ENCODE measurements at regions of chr3 and their contacts with region 1.

Region 1: GRCh38 chr3:141311496-141312353 is 56.6 kb upstream of the ZBTB38 start:
- DNase-seq: peak; percentile 99
- ATAC-seq: peak; percentile 98
- H3K4me3 ChIP-seq: peak overlapping the region; percentile 40
- H3K27ac ChIP-seq: peak overlapping the region; percentile 92
- H3K4me1 ChIP-seq: peaks cover 8% of the 10 kb centered on the region
- H3K27me3 ChIP-seq: no peaks in the 10 kb centered on the region

Region 2: DNA sequence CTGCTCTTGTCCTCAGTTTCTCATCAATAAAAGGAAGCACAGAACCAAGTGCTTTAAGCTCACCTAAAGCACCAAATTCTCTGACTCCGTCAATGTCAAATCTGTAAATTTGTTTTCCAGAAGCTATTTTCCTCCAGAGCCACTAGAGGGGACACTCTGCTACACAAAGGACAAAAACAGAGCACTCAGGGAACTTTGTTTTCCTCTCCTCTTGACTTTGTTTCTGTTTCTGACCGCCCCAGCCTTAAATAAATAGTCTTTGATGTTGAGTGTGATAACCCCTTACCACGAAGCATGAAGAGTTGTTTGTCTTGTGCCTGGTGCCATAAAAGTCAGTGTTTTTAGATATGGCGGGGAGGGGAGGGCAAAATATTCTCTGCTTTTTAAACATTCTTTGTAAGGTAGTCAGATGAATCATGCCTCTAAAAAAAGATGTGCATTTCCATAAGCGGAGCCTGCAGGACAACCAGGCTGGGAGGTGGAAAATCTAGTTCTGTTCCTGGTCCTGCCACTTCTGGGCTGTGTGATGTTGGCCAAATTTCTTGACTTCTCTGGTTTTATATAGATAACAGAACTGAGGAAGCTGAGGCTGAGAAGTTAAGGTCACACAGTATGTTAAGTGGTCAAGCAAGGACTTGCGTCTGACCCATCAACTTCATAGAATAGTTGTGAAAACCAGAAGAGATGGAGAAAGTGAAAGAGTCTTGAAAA is 49.3 kb after region 1 on chr3:
- intact Hi-C with region 1: loop called in 2 of 4 experiments (anchors 5 to 10 kb)
- DNase-seq: no peak
- ATAC-seq: peak; percentile 78 to 92
- H3K4me3 ChIP-seq: peak overlapping the region; percentile 35
- H3K27ac ChIP-seq: no peak overlapping the region
- H3K4me1 ChIP-seq: no peaks in the 10 kb centered on the region
- H3K27me3 ChIP-seq: no peaks in the 10 kb centered on the region

Measured in right cardiac atrium (tissue), 5 donors.